Mammary epithelial cell (primary cell): ENCODE measurements at regions of chr9 and their contacts with region 1.

Region 1: GRCh38 chr9:132901856-132902831 is 23.4 kb downstream of the SPACA9 start:
- DNase-seq: peak; percentile 75
- H3K4me3 ChIP-seq: no peak overlapping the region
- H3K27ac ChIP-seq: no peak overlapping the region
- H3K4me1 ChIP-seq: no peaks in the 10 kb centered on the region
- H3K27me3 ChIP-seq: no peaks in the 10 kb centered on the region
- CTCF ChIP-seq: peak; percentile 93 to 99

Region 2: GRCh38 chr9:132877824-132878694 is 24.1 kb before region 1 on chr9 and contains the start of gene AK8:
- CTCF ChIA-PET with region 1: no interaction called
- dilution Hi-C with region 1: no loop called
- in situ Hi-C with region 1: no loop called
- intact Hi-C with region 1: loop called (anchors 2 kb)
- DNase-seq: peak; percentile 65
- H3K4me3 ChIP-seq: peak within 1 kb of the TSS; percentile 91 to 99 (median 96)
- H3K27ac ChIP-seq: peak within 1 kb of the TSS; percentile 91
- H3K4me1 ChIP-seq: peaks cover 3% of the 10 kb centered on the region
- H3K27me3 ChIP-seq: no peaks in the 10 kb centered on the region
- CTCF ChIP-seq: no peak
- total RNA-seq, gene AK8: 1.1 to 1.2 TPM

Region 3: GRCh38 chr9:133004091-133004998 is 102.2 kb after region 1 on chr9:
- CTCF ChIA-PET with region 1: no interaction called
- dilution Hi-C with region 1: no loop called
- in situ Hi-C with region 1: no loop called
- intact Hi-C with region 1: no loop called
- DNase-seq: no peak
- H3K4me3 ChIP-seq: no peak overlapping the region
- H3K27ac ChIP-seq: no peak overlapping the region
- H3K4me1 ChIP-seq: peaks cover 14% of the 10 kb centered on the region
- H3K27me3 ChIP-seq: no peaks in the 10 kb centered on the region
- CTCF ChIP-seq: no peak

Region 4: GRCh38 chr9:133417541-133418461 is 515.7 kb after region 1 on chr9 and contains the start of gene REXO4:
- CTCF ChIA-PET with region 1: no interaction called
- dilution Hi-C with region 1: no loop called
- in situ Hi-C with region 1: no loop called
- intact Hi-C with region 1: no loop called
- DNase-seq: peak; percentile 87
- H3K4me3 ChIP-seq: peak within 1 kb of the TSS; percentile 80 to 95 (median 93)
- H3K27ac ChIP-seq: peak within 1 kb of the TSS; percentile 64
- H3K4me1 ChIP-seq: peaks cover 12% of the 10 kb centered on the region
- H3K27me3 ChIP-seq: no peaks in the 10 kb centered on the region
- CTCF ChIP-seq: no peak
- total RNA-seq, gene REXO4: 14.8 to 33.1 TPM